Heart right ventricle (tissue), 16 donors: ENCODE measurements at regions of chr12 and their contacts with region 1.

Region 1: DNA sequence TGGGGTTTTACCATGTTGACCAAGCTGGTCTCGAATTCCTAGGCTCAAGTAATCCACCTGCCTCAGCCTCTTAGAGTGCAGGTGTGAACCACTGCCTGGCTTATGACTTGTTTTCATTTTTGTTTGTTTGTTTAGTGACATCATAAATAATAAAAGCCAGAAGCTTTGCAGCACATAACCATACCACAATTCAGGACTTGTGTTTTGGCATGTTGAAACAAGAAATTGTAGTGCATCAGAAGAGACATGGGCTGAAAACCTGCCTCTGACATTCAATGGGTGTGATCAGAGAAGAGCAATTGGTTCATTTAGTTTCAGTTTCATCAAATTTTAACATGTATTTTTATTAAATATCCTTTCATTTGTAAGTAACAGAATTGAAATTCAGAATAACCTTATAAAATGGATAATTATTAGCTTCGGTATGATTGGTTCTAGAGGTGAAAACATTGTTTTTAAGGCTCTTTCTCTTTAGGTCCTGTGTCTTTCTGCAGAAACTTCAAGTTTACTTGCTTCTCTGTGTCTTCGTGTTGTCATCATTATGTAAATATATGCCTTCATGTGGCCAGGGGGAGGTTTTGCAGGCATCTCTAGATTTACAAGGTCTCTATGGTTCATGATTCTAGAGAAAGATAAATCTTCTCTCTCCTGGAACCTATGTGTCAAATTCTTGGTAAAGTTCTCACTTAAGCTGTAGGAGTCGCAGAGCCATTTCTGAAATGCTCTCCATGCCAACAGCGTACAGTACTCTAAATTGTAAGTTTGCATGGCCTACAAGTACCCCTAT is 312.0 kb downstream of the KCNC2 start:
- DNase-seq: no peak
- ATAC-seq: no peak
- H3K4me3 ChIP-seq: no peak overlapping the region
- H3K27ac ChIP-seq: no peak overlapping the region
- H3K4me1 ChIP-seq: no peaks in the 10 kb centered on the region
- H3K27me3 ChIP-seq: no peaks in the 10 kb centered on the region
- CTCF ChIP-seq: no peak

Region 2: DNA sequence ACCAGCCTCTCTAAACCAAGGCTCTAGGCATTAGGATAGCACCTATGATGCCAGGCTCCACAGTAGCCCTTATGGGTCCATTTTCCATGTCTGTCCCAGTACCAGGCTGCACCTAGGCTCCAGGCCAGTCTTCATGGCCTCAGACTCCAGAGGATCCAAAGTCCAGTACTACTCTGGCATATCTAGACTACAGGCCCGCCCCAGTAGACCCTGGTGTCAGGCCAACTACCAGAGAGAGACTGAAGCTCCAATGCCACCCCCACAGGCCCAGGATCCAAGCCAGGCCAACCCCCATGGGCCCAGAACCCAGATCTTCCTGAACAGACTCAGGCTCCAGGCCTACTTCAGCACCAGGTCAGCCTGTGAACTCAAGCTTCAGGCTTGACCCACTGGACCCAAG is 25.0 kb after region 1 on chr12:
- intact Hi-C with region 1: loop called in 1 of 10 experiments (anchors 1 kb)
- DNase-seq: no peak
- ATAC-seq: no peak
- H3K4me3 ChIP-seq: no peak overlapping the region
- H3K27ac ChIP-seq: no peak overlapping the region
- H3K4me1 ChIP-seq: no peaks in the 10 kb centered on the region
- H3K27me3 ChIP-seq: no peaks in the 10 kb centered on the region
- CTCF ChIP-seq: no peak